ENCODE measurements at regions of chr5 and their contacts with region 1.

Region 1: DNA sequence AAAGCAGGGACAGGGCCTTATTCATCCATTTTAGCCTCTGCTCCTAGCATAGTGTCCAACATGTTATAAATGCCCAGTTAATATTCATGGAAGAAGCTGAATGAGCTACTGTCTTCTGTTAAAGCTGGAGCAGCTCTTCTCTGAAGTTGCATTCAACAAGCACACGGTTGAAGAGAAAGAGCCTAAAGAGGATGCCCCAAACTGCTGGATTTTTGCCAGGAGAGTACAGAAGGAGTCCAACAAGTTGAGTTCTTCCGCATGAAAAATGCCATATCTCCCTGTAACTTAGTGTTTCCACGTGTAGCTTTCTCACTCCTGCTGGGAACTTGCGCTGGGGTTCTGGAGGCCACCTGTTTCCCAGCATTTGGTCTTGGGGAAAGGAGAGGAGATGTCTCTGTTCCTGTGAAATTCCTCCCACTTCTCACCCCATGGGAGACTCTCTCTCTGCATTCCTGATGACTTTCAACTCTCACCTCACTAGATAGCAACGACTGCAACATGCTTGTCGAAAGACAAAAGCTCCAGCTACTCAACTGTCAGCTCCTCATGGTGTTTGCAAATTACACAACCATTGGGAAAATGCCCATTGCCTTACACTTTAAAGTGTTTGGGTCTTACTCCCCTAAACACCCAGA is 122.8 kb downstream of the KIF4B start:
- DNase-seq: no peak
- H3K4me3 Mint-ChIP-seq: no peak overlapping the region
- H3K27ac Mint-ChIP-seq: no peak overlapping the region
- H3K4me1 Mint-ChIP-seq: peaks cover 2% of the 10 kb centered on the region
- H3K27me3 Mint-ChIP-seq: peaks cover 18% of the 10 kb centered on the region

Region 2: GRCh38 chr5:155260798-155261197 is 124.5 kb after region 1 on chr5:
- CTCF ChIA-PET with region 1: no interaction called
- intact Hi-C with region 1: loop called (anchors 2 kb)
- DNase-seq: no peak
- H3K4me3 Mint-ChIP-seq: no peak overlapping the region
- H3K27ac Mint-ChIP-seq: no peak overlapping the region
- H3K4me1 Mint-ChIP-seq: no peaks in the 10 kb centered on the region
- H3K27me3 Mint-ChIP-seq: peaks cover 2% of the 10 kb centered on the region

Region 3: GRCh38 chr5:155676967-155677366 is 540.6 kb after region 1 on chr5:
- CTCF ChIA-PET with region 1: no interaction called
- intact Hi-C with region 1: no loop called
- DNase-seq: no peak
- H3K4me3 Mint-ChIP-seq: no peak overlapping the region
- H3K27ac Mint-ChIP-seq: no peak overlapping the region
- H3K4me1 Mint-ChIP-seq: no peaks in the 10 kb centered on the region
- H3K27me3 Mint-ChIP-seq: peaks cover 5% of the 10 kb centered on the region

Measured in activated naive CD4-positive, alpha-beta T cell treated with anti-CD3 and anti-CD28 coated beads for 36 hours (primary cell).